Dendritic cell treated with granulocyte-macrophage colony-stimulating factor and Interleukin-4, amounts not matched to agents 40 ng/mL and 50 ng/mL, for 4 days (primary cell): ENCODE measurements at regions of chr6 and their contacts with region 1.

Region 1: GRCh38 chr6:108782179-108783041 is 65.8 kb upstream of the ARMC2 start:
- H3K4me3 Mint-ChIP-seq: peak overlapping the region; percentile 77
- H3K27ac Mint-ChIP-seq: peak overlapping the region; percentile 15
- H3K4me1 Mint-ChIP-seq: peaks cover 31% of the 10 kb centered on the region
- H3K27me3 Mint-ChIP-seq: peaks cover 21% of the 10 kb centered on the region

Region 2: DNA sequence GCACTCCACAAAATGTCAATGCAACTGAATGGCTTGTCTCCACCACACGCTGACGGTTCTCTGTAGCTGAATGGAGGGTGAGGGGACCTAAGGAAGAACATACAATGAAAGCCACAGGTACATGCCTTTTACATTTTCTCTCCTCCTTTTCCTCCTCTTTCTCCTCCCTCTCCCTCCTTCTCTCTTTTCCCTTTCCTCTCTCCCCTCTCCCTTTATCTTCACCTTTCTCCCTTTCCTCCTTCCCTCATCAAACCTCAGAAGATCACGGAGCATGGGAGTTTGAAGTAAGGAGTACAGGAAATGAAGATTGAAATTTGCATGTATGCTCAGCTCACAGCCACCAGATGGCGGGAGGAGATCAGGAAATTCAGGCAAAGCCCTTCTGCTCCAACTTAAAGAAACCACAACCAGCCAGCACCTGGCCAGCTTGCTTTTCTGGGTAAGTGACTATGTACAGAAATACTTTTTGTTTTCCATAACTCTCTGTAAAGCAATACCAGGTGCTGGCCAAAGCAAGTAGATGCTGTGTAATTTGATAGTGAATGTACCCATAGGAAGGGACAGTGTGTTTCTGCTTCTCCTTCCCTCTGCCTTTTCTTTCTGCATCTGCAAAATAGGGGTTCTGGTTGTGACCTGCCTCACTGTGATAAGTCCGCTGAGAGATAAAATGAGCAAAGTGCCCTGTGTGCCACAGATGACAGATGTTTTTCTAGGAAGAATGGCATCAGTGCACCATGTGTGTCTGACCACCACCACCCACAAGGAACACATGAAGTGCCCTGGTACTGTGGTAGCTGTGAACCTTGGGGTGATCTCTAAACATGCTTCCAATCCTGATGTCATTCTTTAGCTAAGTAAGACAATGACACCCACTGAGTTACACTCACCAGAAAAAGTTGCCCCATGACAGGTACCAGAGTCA is 240.3 kb before region 1 on chr6:
- intact Hi-C with region 1: loop called (anchors 1 kb)
- H3K4me3 Mint-ChIP-seq: no peak overlapping the region
- H3K27ac Mint-ChIP-seq: no peak overlapping the region
- H3K4me1 Mint-ChIP-seq: peaks cover 26% of the 10 kb centered on the region
- H3K27me3 Mint-ChIP-seq: peaks cover 13% of the 10 kb centered on the region

Region 3: DNA sequence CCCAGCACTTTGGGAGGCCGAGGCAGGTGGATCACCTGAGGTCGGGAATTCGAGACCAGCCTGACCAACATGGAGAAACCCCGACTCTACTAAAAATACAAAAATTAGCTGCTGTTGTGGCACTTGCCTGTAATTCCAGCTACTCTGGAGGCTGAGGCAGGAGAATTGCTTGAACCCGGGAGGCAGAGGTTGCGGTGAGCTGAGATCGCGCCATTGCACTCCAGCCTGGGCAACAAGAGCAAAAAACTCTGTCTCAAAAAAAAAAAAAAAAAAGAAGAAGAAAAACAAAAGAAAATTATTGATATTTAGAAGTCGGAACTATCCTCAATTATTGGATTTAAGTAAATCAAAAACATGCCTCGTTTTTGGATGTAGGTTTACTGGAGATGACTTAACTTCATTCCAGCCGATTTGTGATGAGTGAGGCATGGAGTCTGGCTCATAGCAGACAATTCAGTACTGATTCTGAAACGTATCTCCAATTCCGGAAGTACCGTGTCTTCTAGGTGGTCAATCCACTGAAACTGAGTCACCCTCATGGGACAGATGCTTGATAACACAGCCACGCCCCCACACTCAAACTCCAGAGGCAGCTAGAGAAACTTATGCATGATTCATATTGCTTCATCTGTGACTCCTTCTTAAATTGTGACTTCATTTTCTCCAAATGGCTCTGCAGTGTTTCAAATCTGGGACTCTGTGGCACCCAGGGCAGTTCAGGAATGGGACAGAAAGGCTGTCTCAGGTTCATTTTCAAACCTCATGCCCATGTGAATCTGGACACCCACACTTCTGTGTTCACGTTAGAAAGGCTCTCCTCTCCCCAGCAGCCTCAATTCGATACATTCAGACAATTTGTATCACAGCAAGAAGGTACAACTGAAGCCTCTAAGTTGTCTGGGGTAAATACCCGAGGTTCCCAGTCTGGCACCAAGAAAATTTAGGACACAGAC is 44.5 kb before region 1 on chr6:
- intact Hi-C with region 1: loop called (anchors 5 kb)
- H3K4me3 Mint-ChIP-seq: no peak overlapping the region
- H3K27ac Mint-ChIP-seq: peak overlapping the region; percentile 30
- H3K4me1 Mint-ChIP-seq: peaks cover 54% of the 10 kb centered on the region
- H3K27me3 Mint-ChIP-seq: no peaks in the 10 kb centered on the region

Region 4: DNA sequence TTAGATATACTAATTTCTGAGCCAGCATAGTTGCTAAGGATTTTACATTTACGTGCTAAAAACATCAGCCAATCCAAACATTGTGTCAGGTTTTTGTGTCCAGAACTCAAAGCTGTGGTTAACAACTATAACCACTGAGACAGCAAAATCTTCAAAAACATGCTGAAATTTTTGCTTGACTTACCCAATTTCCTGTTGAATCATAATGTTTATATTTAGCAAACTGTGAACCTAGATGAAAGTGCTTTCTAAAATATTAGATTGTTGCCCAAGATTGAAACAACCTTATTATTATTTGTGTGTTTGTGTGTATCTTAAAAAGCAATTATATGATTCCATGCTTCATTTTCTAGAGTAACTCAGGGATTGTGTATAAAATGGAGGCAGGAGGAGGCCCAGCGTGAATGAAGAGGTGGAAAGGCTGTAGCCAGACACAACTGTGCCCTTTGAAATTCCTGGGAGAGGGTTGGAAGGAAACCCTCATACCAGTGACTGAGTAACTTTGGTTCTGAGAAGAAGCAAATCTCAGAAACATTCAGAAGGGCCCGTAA is 113.8 kb after region 1 on chr6:
- intact Hi-C with region 1: loop called (anchors 5 kb)
- H3K4me3 Mint-ChIP-seq: no peak overlapping the region
- H3K27ac Mint-ChIP-seq: peak overlapping the region; percentile 76
- H3K4me1 Mint-ChIP-seq: peaks cover 26% of the 10 kb centered on the region
- H3K27me3 Mint-ChIP-seq: peaks cover 7% of the 10 kb centered on the region

Region 5: DNA sequence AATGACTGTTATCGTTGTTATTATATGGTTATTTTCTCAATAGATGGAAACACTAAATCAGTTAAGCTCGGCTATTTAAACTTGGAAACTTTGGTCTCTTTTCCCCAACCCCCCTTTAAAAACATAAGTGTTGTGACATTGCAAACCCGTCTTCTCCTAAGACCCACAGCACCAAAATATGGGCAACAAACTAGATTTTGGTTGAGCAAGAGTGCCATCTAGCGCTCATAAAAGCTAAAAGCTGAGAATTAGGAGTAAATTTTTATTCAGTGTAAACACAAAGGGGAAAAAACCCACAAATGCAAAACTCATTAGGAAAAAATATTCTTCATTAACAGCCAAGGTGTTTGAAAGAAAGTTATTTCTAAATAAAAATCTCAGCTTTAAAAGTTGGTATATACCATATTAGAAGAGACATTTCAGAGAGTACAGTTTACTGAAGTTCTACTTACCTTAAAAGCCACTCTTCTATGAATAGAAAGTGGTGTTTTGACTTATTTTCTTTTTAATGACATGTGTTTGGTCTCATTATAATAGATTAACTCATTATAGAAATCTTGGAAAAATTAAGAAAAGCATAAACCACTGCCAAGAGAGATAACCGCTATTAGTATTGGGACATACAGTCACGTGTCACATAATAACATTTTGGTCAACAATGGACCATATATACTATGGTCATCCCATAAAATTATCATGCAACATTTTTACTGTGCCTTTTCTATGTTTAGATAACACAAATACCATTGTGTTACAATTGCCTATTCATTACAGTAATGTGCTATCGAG is 291.1 kb after region 1 on chr6:
- intact Hi-C with region 1: loop called (anchors 10 kb)
- H3K4me3 Mint-ChIP-seq: no peak overlapping the region
- H3K27ac Mint-ChIP-seq: no peak overlapping the region
- H3K4me1 Mint-ChIP-seq: peaks cover 10% of the 10 kb centered on the region
- H3K27me3 Mint-ChIP-seq: no peaks in the 10 kb centered on the region

Region 6: GRCh38 chr6:109406196-109406595 is 623.8 kb after region 1 on chr6:
- intact Hi-C with region 1: no loop called
- H3K4me3 Mint-ChIP-seq: no peak overlapping the region
- H3K27ac Mint-ChIP-seq: no peak overlapping the region
- H3K4me1 Mint-ChIP-seq: peaks cover 5% of the 10 kb centered on the region
- H3K27me3 Mint-ChIP-seq: no peaks in the 10 kb centered on the region